Esophagus muscularis mucosa (tissue), 4 donors: ENCODE measurements at regions of chr11 and their contacts with region 1.

Region 1: DNA sequence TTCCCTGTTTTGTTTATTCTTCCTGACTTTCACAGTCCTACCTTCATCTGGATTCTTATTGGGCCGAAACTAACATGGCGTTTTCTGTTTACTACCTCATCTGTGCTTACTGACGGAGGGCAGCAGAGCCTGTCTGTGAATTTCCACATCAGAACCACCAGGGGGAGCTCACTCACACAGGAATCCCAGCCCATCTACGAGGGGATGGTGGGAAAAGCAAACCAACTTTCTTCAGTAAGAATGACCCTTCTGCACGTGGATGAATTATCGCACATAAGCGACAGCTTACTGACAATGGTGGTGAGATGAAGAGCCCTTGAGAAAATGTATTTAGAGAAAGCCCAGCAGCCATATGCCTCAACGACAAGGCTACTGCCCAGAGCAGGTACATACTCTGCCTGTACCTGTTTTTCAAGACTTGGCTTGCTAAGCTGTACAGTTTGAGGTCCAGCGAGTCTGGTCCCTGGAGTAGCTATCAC is 42.5 kb downstream of the LARGE2 start:
- DNase-seq: no peak
- H3K4me3 ChIP-seq: no peak overlapping the region
- H3K27ac ChIP-seq: peak overlapping the region in 2 of 4 donors; percentile 1 to 40
- H3K4me1 ChIP-seq: peaks cover 0 to 21% (median 2%) of the 10 kb centered on the region in 4 donors
- H3K27me3 ChIP-seq: no peaks in the 10 kb centered on the region
- CTCF ChIP-seq: peak; percentile 88 to 92 (median 88)
- EP300 ChIP-seq: no peak
- POLR2A ChIP-seq: no peak

Region 2: DNA sequence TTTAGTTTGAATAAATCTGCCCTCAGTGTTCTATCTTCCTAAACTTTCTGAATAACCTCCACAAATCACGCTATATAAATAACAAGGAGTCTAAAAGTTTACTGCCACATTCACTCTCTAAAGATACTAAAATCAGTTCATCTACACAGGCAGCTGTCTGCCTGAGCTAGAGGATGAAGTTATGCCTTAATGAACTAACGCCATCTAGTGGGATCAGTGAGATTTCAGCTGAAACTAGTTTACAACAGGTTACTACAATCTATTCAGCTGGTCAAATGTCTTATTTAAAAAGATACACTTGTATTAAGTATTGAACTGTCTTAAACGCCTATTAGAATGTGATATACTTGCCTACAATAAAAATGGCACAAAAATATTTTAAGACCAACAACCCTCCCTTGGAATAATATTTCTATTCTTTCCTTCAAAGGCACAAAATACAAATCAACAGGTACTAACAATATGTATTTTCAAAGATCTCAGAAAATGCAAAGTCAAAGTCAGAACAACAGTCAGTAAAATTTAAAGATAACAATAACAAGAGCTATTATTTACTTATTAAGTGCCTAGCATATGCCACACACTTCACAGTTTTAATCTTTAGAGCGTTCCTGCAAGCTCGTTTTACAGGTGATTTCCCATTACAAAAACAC is 41.6 kb after region 1 on chr11:
- intact Hi-C with region 1: loop called (anchors 1 kb)
- DNase-seq: no peak
- H3K4me3 ChIP-seq: no peak overlapping the region
- H3K27ac ChIP-seq: no peak overlapping the region
- H3K4me1 ChIP-seq: peaks cover 5 to 53% (median 40%) of the 10 kb centered on the region in 4 donors
- H3K27me3 ChIP-seq: no peaks in the 10 kb centered on the region
- CTCF ChIP-seq: peak; percentile 66 to 78 (median 69)
- EP300 ChIP-seq: no peak
- POLR2A ChIP-seq: no peak